ENCODE measurements at regions of chr2 and their contacts with region 1.

Region 1: GRCh38 chr2:30711646-30712085 is 95.6 kb downstream of the CAPN13 start:
- DNase-seq: peak; percentile 92
- H3K4me3 ChIP-seq: no peak overlapping the region
- H3K27ac ChIP-seq: no peak overlapping the region
- H3K4me1 ChIP-seq: peaks cover 2% of the 10 kb centered on the region
- H3K27me3 ChIP-seq: peaks cover 5% of the 10 kb centered on the region
- CTCF ChIP-seq: peak; percentile 99

Region 2: GRCh38 chr2:28958689-28959088 is 1753.0 kb before region 1 on chr2:
- CTCF ChIA-PET with region 1: no interaction called
- POLR2A ChIA-PET with region 1: no interaction called
- intact Hi-C with region 1: loop called (anchors 5 kb)
- DNase-seq: peak; percentile 89
- H3K4me3 ChIP-seq: no peak overlapping the region
- H3K27ac ChIP-seq: no peak overlapping the region
- H3K4me1 ChIP-seq: peaks cover 8% of the 10 kb centered on the region
- H3K27me3 ChIP-seq: no peaks in the 10 kb centered on the region
- CTCF ChIP-seq: peak; percentile 71

Region 3: DNA sequence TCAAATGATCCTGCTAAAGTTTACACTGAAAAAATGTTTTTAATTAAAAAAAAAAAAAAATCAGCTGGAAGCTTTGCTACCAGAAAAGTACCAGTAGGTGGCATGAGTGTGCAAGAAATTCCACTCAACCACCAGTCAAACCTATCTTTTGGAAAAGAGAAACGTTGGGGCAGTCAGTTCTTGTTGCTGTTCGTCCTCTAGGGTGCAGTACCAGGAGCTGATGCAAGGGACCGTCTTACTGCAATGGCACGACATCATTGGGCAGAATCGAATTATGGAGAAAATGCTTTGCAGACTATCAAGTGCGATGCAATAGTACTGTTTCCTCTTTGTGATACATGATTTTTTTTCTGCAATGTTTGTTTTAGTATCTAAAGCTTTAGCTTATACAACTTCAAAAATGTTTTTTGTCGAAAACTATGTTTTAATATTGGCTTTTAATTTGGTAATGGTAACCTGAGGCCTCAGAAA is 546.6 kb before region 1 on chr2:
- CTCF ChIA-PET with region 1: interaction called, 107 read pairs
- POLR2A ChIA-PET with region 1: interaction called, 3 read pairs
- intact Hi-C with region 1: loop called (anchors 1 kb)
- DNase-seq: peak; percentile 96
- H3K4me3 ChIP-seq: no peak overlapping the region
- H3K27ac ChIP-seq: peak overlapping the region; percentile 13
- H3K4me1 ChIP-seq: peaks cover 25% of the 10 kb centered on the region
- H3K27me3 ChIP-seq: no peaks in the 10 kb centered on the region
- CTCF ChIP-seq: peak; percentile 97

Region 4: DNA sequence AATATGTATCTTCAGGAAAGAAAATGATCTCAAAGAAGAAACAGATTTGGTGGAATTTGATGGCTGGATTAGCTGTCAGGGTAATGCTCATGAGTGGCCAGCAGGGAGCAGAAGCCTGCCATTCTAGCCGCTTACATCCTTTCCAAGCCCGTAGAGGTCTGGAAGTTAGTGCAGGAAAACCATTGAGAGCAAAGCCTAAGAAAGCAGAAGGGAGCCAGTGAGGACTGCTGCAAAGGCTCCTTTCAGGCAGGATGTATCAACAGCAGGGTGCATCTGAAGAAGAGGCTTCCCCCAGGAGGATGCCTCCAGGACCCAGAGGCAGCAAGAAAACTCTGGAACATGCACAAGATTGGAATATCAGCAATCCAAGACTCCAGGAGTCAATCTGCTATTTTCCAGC is 503.2 kb before region 1 on chr2:
- CTCF ChIA-PET with region 1: interaction called, 39 read pairs
- POLR2A ChIA-PET with region 1: no interaction called
- intact Hi-C with region 1: loop called (anchors 1 kb)
- DNase-seq: peak; percentile 89
- H3K4me3 ChIP-seq: no peak overlapping the region
- H3K27ac ChIP-seq: no peak overlapping the region
- H3K4me1 ChIP-seq: peaks cover 14% of the 10 kb centered on the region
- H3K27me3 ChIP-seq: no peaks in the 10 kb centered on the region
- CTCF ChIP-seq: peak; percentile 88

Region 5: GRCh38 chr2:30421604-30422443 is 289.8 kb before region 1 on chr2:
- CTCF ChIA-PET with region 1: no interaction called
- POLR2A ChIA-PET with region 1: no interaction called
- intact Hi-C with region 1: no loop called
- DNase-seq: peak; percentile 74
- H3K4me3 ChIP-seq: peak overlapping the region; percentile 13
- H3K27ac ChIP-seq: peak overlapping the region; percentile 90
- H3K4me1 ChIP-seq: peaks cover 27% of the 10 kb centered on the region
- H3K27me3 ChIP-seq: no peaks in the 10 kb centered on the region
- CTCF ChIP-seq: no peak

Region 6: GRCh38 chr2:30747211-30747610 is 35.5 kb after region 1 on chr2:
- CTCF ChIA-PET with region 1: no interaction called
- POLR2A ChIA-PET with region 1: no interaction called
- intact Hi-C with region 1: no loop called
- DNase-seq: no peak
- H3K4me3 ChIP-seq: no peak overlapping the region
- H3K27ac ChIP-seq: no peak overlapping the region
- H3K4me1 ChIP-seq: no peaks in the 10 kb centered on the region
- H3K27me3 ChIP-seq: peaks cover 18% of the 10 kb centered on the region
- CTCF ChIP-seq: no peak

Region 7: DNA sequence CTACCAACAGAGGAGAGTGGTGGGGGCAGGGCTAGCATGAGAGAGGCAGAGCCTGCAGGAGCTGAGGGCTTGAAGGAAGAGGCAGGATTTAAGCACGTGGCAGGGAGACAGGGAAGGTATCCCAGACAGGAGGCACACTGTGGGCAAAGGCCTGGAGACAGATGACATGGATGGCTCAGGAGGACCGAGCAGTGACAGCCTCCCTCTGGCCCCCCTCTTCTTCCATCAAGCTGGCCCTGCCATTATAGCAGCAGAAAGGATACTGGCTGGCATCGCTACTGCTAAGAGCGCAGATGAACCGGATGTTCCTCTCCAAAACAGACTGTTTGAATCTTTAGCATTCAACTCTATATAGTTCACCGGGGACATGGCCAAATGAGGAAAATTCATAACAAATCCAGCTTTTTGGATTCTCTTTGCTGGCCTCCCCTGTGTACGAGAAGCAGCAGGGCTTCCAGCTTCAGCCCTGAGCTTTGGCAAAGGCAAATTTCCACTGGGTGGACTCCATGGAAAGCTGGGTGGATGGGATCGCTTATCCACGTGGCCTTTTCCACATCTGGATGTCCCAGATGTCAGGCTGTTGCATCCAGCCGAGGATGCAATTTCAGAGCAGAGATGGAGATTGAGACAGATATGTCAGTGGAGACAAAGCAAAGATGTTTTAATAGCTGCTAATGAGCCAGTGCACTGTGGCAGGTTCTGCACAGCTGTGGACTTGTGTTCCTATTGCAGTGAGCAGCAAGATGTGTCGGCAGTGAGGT is 59.3 kb after region 1 on chr2:
- CTCF ChIA-PET with region 1: no interaction called
- POLR2A ChIA-PET with region 1: no interaction called
- intact Hi-C with region 1: no loop called
- DNase-seq: no peak
- H3K4me3 ChIP-seq: no peak overlapping the region
- H3K27ac ChIP-seq: no peak overlapping the region
- H3K4me1 ChIP-seq: no peaks in the 10 kb centered on the region
- H3K27me3 ChIP-seq: peaks cover 59% of the 10 kb centered on the region
- CTCF ChIP-seq: no peak

Region 8: DNA sequence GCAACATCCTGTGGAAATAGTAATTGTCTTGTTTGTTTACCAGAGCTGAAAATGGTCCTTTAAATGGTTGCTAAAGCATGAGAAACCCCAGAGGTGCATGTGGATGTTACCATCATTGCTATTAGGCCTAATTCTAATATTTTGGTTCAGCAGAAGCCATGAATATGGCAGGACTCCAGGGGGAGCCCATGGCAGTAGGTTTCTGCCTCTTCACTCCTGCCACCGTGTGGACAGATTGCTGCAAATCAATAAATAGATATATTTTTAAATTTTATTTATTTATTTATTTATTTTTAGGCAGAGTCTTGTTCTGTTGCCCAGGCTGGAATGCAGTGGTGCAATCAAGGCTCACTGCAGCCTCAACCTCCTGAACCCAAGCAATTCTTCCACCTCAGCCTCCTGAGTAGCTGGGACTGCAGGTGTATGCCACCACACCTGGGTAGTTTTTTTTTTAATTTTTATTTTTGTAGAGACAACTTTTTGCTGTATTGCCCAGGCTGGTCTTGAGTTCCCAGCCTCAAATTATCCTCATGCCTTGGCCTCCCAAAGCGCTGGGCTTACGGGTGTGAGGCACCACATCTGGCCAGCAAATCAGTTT is 150.5 kb after region 1 on chr2:
- CTCF ChIA-PET with region 1: interaction called, 4 read pairs
- POLR2A ChIA-PET with region 1: interaction called, 7 read pairs
- intact Hi-C with region 1: loop called (anchors 2 kb)
- DNase-seq: peak; percentile 85
- H3K4me3 ChIP-seq: no peak overlapping the region
- H3K27ac ChIP-seq: no peak overlapping the region
- H3K4me1 ChIP-seq: no peaks in the 10 kb centered on the region
- H3K27me3 ChIP-seq: no peaks in the 10 kb centered on the region
- CTCF ChIP-seq: peak; percentile 74

Region 9: DNA sequence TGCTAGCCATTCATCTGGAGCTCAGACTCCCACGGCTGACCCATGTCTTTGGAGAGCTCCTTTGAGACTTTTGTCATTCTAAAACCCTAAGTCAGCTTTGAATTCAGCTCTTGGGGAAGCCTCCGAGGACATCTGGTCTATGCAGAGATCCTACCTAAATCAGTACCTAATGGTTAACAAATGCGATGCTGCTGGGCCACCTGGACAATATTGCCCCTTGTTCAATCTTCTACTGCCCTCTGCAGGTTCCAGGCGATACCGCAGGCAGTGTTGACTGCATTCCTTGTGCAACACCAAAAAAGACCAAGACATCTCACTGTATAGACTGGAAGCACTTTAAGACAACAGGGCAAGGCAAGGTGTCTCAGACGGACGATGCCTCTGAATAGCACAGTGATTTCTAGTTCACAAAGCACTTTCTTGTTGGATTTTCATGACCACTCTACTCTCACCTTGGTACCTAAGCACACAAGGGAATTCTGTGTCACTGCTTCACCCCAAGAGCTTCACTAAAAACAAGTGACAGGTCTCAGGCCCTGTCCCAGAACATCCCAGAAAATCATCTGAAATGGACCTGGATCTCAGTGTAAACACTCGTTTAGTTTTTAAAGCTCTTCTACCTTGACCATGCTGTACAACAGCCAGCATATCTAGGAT is 622.0 kb after region 1 on chr2:
- CTCF ChIA-PET with region 1: interaction called, 10 read pairs
- POLR2A ChIA-PET with region 1: no interaction called
- intact Hi-C with region 1: loop called (anchors 1 kb)
- DNase-seq: peak; percentile 83
- H3K4me3 ChIP-seq: no peak overlapping the region
- H3K27ac ChIP-seq: no peak overlapping the region
- H3K4me1 ChIP-seq: no peaks in the 10 kb centered on the region
- H3K27me3 ChIP-seq: no peaks in the 10 kb centered on the region
- CTCF ChIP-seq: peak; percentile 97

Region 10: GRCh38 chr2:31729764-31730092 is 1018.1 kb after region 1 on chr2:
- CTCF ChIA-PET with region 1: no interaction called
- POLR2A ChIA-PET with region 1: no interaction called
- intact Hi-C with region 1: loop called (anchors 10 kb)
- DNase-seq: peak; percentile 62
- H3K4me3 ChIP-seq: no peak overlapping the region
- H3K27ac ChIP-seq: no peak overlapping the region
- H3K4me1 ChIP-seq: peaks cover 10% of the 10 kb centered on the region
- H3K27me3 ChIP-seq: no peaks in the 10 kb centered on the region
- CTCF ChIP-seq: peak; percentile 74

Measured in A673 (cell line).